HCT116 (cell line): ENCODE measurements at regions of chr17 and their contacts with region 1.

Region 1: DNA sequence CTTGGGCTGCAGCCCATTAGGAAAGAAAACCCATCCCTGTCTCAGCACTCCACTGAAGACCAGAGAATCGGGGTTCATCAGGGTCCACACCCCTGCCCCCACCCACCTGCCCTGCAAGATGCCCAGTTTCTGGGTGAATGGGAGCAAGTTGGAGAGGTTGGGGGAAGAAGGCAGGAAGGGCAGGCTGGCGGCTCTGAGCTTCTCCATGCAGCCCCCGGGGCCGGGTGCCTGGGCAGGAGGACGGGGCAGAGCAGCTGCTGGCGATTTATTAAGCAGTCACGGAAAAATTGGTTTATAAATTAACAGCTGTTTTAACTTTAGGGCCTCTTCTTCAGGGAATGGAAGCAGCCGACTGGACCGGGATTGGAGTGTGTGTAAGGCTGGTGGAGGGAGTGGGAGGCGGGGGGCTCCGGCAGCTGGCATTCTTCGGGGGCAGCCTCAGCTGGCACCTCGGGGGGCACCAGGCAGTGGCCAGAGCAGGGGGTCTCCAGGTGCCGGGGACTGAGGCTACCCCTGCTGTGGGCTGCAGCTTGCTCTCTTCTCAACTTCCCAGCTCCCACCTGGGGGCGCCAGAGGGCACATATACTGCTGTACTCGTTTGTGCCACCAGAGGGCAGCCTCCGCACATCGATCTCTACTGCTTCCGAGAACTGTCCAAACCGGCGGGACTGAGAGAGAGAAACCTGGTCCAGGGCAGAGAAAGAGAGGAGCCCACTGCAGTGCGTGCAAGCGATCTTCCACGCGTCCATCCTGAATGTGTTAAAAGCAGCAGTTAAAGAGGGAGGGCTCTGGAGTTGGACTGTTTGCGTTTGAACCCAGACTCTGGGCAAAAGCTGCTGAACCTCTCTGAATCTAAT is 5.0 kb upstream of the PPP1R1B start:
- DNase-seq: no peak
- ATAC-seq: peak; percentile 51
- H3K4me3 ChIP-seq: no peak overlapping the region
- H3K27ac ChIP-seq: no peak overlapping the region
- H3K4me1 ChIP-seq: peaks cover 19 to 34% of the 10 kb centered on the region in 2 experiments; a peak in 3 of 4 replicates
- H3K27me3 ChIP-seq: no peaks in the 10 kb centered on the region
- CTCF ChIP-seq: peak; percentile 100
- POLR2A ChIP-seq: no peak
- RAD21 ChIP-seq: peak; percentile 97

Region 2: GRCh38 chr17:39209317-39210092 is 412.2 kb before region 1 on chr17:
- CTCF ChIA-PET with region 1: interaction called, 48 read pairs
- POLR2A ChIA-PET with region 1: no interaction called
- RAD21 ChIA-PET with region 1: no interaction called
- intact Hi-C with region 1: loop called (anchors 5 kb)
- DNase-seq: no peak
- ATAC-seq: no peak
- H3K4me3 ChIP-seq: no peak overlapping the region
- H3K27ac ChIP-seq: no peak overlapping the region
- H3K4me1 ChIP-seq: peaks cover 20 to 39% of the 10 kb centered on the region in 2 experiments
- H3K27me3 ChIP-seq: no peaks in the 10 kb centered on the region
- CTCF ChIP-seq: no peak
- POLR2A ChIP-seq: no peak
- RAD21 ChIP-seq: no peak

Region 3: DNA sequence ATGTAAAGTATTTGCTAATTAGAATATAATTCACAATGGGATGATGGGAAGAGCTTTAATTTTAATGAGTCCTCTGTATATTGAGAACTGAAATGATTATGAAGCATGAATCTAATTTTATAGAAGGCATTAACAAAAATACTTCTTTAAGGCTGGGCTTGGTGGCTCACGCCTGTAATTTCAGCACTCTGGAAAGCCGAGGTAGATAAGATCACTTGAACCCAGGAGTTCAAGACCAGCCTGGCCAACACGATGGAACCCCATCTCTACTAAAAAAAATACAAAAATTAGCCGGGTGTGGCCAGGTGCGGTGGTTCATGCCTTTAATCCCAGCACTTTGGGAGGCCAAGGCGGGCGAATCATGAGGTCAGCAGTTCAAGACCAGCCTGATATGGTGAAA is 148.4 kb before region 1 on chr17:
- CTCF ChIA-PET with region 1: no interaction called
- POLR2A ChIA-PET with region 1: no interaction called
- RAD21 ChIA-PET with region 1: no interaction called
- intact Hi-C with region 1: no loop called
- DNase-seq: no peak
- ATAC-seq: no peak
- H3K4me3 ChIP-seq: no peak overlapping the region
- H3K27ac ChIP-seq: no peak overlapping the region
- H3K4me1 ChIP-seq: no peaks in the 10 kb centered on the region
- H3K27me3 ChIP-seq: no peaks in the 10 kb centered on the region
- CTCF ChIP-seq: no peak
- POLR2A ChIP-seq: no peak
- RAD21 ChIP-seq: no peak

Region 4: DNA sequence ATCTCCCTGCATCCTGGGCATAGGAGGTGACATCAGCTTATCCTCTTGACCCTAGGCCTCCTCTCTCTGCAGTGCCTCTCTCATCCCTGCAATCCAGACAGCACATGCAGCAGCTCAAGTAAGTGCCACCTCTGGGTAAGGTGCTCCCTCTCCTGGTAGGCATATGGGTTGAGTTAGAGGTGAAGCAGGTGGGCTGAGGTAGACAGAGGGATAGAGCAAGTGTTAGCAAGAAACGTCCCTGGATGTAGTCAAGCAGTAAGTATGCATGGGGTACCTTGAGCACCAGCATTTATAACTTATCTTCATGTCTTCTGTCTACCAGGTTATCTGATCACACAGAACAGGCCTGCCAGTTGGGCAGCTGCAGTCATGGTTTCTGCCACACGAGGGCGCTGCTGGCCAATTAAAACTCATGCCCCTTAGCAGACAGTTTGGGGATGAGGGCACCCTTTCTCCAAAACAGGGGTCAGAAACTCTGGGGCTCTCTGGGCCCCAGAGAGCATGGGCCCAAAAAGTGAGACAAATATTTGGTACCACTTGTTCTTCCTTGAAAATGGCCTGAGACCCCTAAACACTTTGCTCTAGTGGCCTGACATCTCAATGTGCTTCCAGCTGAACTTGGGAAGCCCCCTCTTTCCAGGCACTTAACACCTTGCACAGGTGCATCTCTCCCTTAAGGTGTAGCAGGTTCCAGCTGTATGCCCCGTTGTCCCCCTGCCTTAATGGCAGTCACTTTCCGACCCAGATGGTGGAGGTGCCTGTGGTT is 73.9 kb before region 1 on chr17:
- CTCF ChIA-PET with region 1: interaction called, 58 read pairs
- POLR2A ChIA-PET with region 1: no interaction called
- RAD21 ChIA-PET with region 1: interaction called, 5 to 6 read pairs
- intact Hi-C with region 1: loop called (anchors 1 kb)
- DNase-seq: peak; percentile 13
- ATAC-seq: peak; percentile 92
- H3K4me3 ChIP-seq: no peak overlapping the region
- H3K27ac ChIP-seq: no peak overlapping the region
- H3K4me1 ChIP-seq: no peaks in the 10 kb centered on the region
- H3K27me3 ChIP-seq: no peaks in the 10 kb centered on the region
- CTCF ChIP-seq: peak; percentile 92 to 99 (median 98)
- POLR2A ChIP-seq: no peak
- RAD21 ChIP-seq: peak; percentile 83

Region 5: GRCh38 chr17:39634384-39634871 is 12.7 kb after region 1 on chr17:
- CTCF ChIA-PET with region 1: interaction called, 157 read pairs
- POLR2A ChIA-PET with region 1: interaction called, 4 read pairs
- RAD21 ChIA-PET with region 1: interaction called, 7 to 12 read pairs
- intact Hi-C with region 1: no loop called
- DNase-seq: no peak
- ATAC-seq: no peak
- H3K4me3 ChIP-seq: no peak overlapping the region
- H3K27ac ChIP-seq: no peak overlapping the region
- H3K4me1 ChIP-seq: peaks cover 60 to 78% of the 10 kb centered on the region in 2 experiments
- H3K27me3 ChIP-seq: no peaks in the 10 kb centered on the region
- CTCF ChIP-seq: peak; percentile 64 to 97 (median 83); a peak in 5 of 6 replicates
- POLR2A ChIP-seq: no peak
- RAD21 ChIP-seq: no peak; the same call in 1 of the 2 replicates

Region 6: GRCh38 chr17:39653662-39654331 is 32.0 kb after region 1 on chr17:
- CTCF ChIA-PET with region 1: interaction called, 30 read pairs
- POLR2A ChIA-PET with region 1: no interaction called
- RAD21 ChIA-PET with region 1: interaction called, 3 to 5 read pairs
- intact Hi-C with region 1: no loop called
- DNase-seq: no peak
- ATAC-seq: peak; percentile 76
- H3K4me3 ChIP-seq: no peak overlapping the region
- H3K27ac ChIP-seq: no peak overlapping the region; the same call in 1 of the 2 replicates
- H3K4me1 ChIP-seq: peaks cover 13 to 52% of the 10 kb centered on the region in 2 experiments
- H3K27me3 ChIP-seq: no peaks in the 10 kb centered on the region
- CTCF ChIP-seq: peak; percentile 70 to 99 (median 98); a peak in 5 of 6 replicates
- POLR2A ChIP-seq: no peak
- RAD21 ChIP-seq: no peak; the same call in none of the 2 replicates

Region 7: GRCh38 chr17:39738931-39739884 is 117.5 kb after region 1 on chr17:
- CTCF ChIA-PET with region 1: interaction called, 5 read pairs
- POLR2A ChIA-PET with region 1: interaction called, 3 read pairs
- RAD21 ChIA-PET with region 1: interaction called in 1 of 2 experiments, 3 read pairs
- intact Hi-C with region 1: loop called (anchors 5 kb)
- DNase-seq: peak; percentile 34
- ATAC-seq: peak; percentile 52
- H3K4me3 ChIP-seq: peak overlapping the region; percentile 69 to 84
- H3K27ac ChIP-seq: peak overlapping the region; percentile 92
- H3K4me1 ChIP-seq: peaks cover 34 to 59% of the 10 kb centered on the region in 2 experiments
- H3K27me3 ChIP-seq: no peaks in the 10 kb centered on the region
- CTCF ChIP-seq: no peak
- POLR2A ChIP-seq: no peak
- RAD21 ChIP-seq: no peak

Region 8: DNA sequence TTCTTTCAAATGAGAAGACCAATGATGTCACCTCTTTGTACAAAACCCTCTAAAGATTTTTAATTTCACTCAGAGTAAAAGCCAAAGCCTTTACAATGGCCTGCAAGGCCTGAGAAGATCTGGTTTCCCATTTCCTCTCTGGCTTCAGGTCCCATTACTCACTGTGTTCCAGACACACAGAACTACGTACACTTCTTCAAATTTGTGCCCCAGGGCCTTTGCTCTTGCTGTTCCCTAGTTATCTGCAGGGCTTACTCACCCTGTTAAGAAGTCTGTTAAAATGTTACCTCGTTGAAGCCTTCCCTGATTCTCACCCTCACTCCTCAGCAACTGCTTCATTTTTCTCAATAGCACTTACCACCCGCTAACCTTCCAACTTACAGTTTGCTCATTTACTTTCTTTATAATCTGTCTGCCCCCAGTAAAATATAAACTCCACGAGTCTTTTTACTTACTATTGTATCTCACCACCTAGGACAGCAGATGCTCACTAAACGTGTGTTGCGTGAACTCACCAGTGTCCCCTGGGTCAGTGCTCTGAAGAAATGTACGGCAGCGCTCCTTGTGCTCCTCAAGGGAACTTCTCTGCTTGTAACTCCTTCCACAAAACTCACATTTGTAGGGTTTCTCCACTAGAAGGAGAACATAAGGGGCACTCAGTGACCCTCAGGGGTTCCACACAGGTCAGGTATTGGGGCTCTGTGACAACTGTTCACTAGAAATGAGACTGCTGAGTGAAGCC is 166.2 kb after region 1 on chr17:
- CTCF ChIA-PET with region 1: no interaction called
- POLR2A ChIA-PET with region 1: no interaction called
- RAD21 ChIA-PET with region 1: no interaction called
- intact Hi-C with region 1: no loop called
- DNase-seq: no peak
- ATAC-seq: no peak
- H3K4me3 ChIP-seq: no peak overlapping the region
- H3K27ac ChIP-seq: no peak overlapping the region
- H3K4me1 ChIP-seq: peaks cover 0 to 1% of the 10 kb centered on the region in 2 experiments; a peak in 1 of 4 replicates
- H3K27me3 ChIP-seq: no peaks in the 10 kb centered on the region; the same call in 1 of the 2 replicates
- CTCF ChIP-seq: no peak
- POLR2A ChIP-seq: no peak
- RAD21 ChIP-seq: no peak

Region 9: GRCh38 chr17:39808409-39808997 is 186.8 kb after region 1 on chr17:
- CTCF ChIA-PET with region 1: no interaction called
- POLR2A ChIA-PET with region 1: no interaction called
- RAD21 ChIA-PET with region 1: no interaction called
- intact Hi-C with region 1: no loop called
- DNase-seq: no peak
- ATAC-seq: no peak
- H3K4me3 ChIP-seq: no peak overlapping the region
- H3K27ac ChIP-seq: no peak overlapping the region
- H3K4me1 ChIP-seq: no peaks in the 10 kb centered on the region
- H3K27me3 ChIP-seq: no peaks in the 10 kb centered on the region; the same call in 1 of the 2 replicates
- CTCF ChIP-seq: no peak
- POLR2A ChIP-seq: no peak
- RAD21 ChIP-seq: no peak

Region 10: DNA sequence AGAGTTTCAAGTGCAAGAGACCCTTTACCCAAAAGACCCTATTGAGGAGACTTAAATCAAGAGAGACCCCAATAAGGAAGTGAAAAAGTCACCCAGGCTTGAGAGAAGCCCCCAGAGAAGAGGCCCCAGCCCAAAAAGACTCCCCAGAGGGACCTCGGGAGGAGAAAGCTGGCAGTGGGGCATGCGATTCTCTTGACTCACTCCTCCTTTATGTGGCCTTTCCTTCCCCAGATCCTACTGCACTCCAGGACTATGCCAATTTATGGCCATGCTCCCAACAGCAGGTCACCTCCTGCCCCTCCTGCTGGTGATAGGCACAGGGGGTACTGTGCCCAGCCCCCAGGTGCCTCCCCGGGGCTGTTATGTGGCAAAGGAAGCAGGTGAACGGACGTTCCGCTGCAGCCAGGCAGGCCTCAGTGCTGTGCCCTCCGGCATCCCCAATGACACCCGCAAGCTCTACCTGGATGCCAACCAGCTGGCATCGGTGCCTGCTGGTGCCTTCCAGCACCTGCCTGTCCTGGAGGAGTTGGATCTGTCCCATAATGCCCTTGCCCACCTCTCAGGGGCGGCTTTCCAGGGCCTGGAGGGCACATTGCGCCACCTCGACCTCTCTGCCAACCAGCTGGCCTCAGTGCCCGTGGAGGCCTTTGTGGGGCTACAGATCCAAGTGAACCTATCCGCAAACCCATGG is 322.1 kb after region 1 on chr17:
- CTCF ChIA-PET with region 1: no interaction called
- POLR2A ChIA-PET with region 1: no interaction called
- RAD21 ChIA-PET with region 1: no interaction called
- intact Hi-C with region 1: no loop called
- DNase-seq: no peak
- ATAC-seq: no peak
- H3K4me3 ChIP-seq: no peak overlapping the region
- H3K27ac ChIP-seq: no peak overlapping the region
- H3K4me1 ChIP-seq: peaks cover 5 to 6% of the 10 kb centered on the region in 2 experiments; a peak in 2 of 4 replicates
- H3K27me3 ChIP-seq: no peaks in the 10 kb centered on the region
- CTCF ChIP-seq: no peak
- POLR2A ChIP-seq: no peak
- RAD21 ChIP-seq: no peak

Region 11: DNA sequence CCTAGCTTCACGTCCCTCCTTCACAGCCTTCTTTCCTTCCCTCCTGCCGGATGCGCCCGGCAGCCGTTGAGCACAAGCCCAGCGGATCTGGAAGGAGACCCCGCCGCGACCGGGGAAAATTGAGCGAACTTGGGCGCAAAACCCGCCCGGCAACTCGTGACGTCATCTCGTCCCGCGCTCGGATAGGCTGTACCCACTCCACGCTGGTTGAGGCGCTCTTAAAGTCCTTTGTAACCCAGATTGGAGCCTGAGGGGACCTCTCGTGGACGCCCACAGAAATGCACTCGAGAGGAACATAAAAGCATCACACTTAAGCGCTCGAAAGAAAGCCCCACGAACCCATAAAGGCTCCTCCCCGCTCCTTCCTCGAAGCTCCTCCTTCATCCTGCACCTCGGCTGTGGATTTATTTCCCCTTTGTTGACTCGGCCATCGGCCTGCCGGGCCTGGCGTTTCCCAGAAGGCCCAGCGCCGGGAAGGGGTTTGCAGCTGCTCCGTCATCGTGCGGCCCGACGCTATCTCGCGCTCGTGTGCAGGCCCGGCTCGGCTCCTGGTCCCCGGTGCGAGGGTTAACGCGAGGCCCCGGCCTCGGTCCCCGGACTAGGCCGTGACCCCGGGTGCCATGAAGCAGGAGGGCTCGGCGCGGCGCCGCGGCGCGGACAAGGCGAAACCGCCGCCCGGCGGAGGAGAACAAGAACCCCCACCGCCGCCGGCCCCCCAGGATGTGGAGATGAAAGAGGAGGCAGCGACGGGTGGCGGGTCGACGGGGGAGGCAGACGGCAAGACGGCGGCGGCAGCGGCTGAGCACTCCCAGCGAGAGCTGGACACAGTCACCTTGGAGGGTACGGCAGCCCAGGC is 358.8 kb after region 1 on chr17 and contains the start of gene PSMD3:
- CTCF ChIA-PET with region 1: interaction called, 3 read pairs
- POLR2A ChIA-PET with region 1: no interaction called
- RAD21 ChIA-PET with region 1: no interaction called
- intact Hi-C with region 1: loop called (anchors 5 kb)
- DNase-seq: peak; percentile 100
- ATAC-seq: peak; percentile 95
- H3K4me3 ChIP-seq: peak within 1 kb of the TSS; percentile 90 to 100
- H3K27ac ChIP-seq: peak within 1 kb of the TSS; percentile 94
- H3K4me1 ChIP-seq: peaks cover 13 to 25% of the 10 kb centered on the region in 2 experiments; a peak in 3 of 4 replicates
- H3K27me3 ChIP-seq: no peaks in the 10 kb centered on the region
- CTCF ChIP-seq: peak; percentile 63 to 96 (median 67)
- POLR2A ChIP-seq: no peak
- RAD21 ChIP-seq: peak; percentile 96
- total RNA-seq, gene PSMD3: 152 TPM